ENCODE measurements at regions of chr4 and their contacts with region 1.

Region 1: GRCh38 chr4:78864405-78865024 is 74.7 kb downstream of the PAQR3 start:
- DNase-seq: peak; percentile 42
- CTCF ChIP-seq: peak; percentile 69

Region 2: DNA sequence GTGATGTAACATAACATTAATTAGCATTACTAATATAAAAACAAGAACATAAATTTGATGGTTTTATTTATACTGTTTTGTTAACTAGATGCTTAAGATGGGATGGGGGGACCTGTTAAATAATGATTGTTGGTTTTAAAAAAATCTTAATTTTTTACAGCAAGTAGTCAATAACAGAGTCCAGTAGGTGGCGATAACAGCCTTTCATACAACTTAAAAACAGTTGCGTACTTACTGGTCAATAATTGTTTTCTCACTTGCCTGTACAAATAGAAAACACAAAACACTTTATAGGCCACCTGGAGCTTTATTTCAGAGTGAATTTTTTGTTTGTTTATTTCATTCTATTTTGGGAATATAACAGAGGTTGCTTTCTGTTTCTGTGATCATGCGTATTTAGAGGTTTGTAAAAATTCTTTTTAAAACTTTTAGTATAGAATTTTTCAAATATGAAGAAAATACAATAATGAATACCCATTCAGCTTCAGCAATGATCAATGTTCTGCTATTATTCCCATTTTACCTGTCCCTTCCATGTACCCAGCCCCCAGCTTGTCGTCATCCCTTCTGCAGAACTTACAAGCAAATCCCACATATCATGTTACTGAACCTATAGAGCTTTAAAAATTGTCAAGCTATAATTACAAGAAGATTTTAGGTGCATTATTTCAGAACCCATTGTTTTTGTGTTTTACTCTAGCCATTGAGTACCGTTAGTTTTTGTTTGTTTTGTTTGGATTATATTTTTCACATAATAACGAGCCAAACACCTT is 904.8 kb before region 1 on chr4:
- in situ Hi-C with region 1: loop called (anchors 25 kb)
- DNase-seq: peak; percentile 32
- CTCF ChIP-seq: peak; percentile 62